ENCODE measurements at regions of chr15 and their contacts with region 1.

Region 1: GRCh38 chr15:81265944-81266775 is 57.8 kb downstream of the STARD5 start:
- DNase-seq: no peak
- ATAC-seq: peak; percentile 97
- H3K4me3 ChIP-seq: no peak overlapping the region
- H3K27ac ChIP-seq: no peak overlapping the region
- H3K4me1 ChIP-seq: peaks cover 22% of the 10 kb centered on the region
- H3K27me3 ChIP-seq: no peaks in the 10 kb centered on the region; a peak in 1 of 4 replicates
- CTCF ChIP-seq: peak; percentile 93 to 94 (median 94)
- EP300 ChIP-seq: no peak
- POLR2A ChIP-seq: no peak
- RAD21 ChIP-seq: peak; percentile 92

Region 2: DNA sequence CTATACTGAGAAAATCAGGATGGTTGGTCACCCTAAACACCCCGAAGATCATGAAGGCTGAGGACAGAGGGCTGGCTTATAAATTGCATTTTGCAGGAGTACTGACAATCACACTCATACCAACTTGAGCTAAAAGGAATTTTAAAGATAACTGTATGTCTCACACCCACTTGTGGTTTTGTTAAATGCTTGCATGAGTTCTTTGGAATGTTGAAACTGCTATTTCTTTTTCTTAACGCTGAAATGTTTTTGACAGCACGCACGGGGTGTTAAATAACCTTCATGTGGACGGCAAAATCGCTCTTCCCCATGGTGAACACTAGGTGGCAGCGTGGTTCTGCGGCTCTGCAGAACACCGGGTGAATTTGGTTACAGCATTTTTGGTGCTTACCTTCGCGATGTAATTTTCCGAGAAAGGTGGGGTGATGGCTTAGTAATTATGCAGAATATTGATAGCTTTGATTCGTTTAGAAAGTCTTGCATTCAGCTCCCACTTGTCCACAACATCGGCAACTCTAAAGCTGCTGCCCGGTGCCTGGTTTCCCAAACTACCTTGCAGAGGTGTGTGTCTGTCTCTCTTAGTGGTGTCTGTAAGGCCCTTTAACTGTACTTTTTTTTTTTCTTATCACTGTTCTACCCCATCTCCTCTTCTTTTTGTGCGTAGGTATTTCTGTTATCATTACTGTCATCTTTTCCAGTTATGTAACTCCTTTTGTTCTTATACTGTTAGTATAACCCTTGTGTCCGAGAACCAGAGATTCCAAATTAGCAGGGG is 810.3 kb before region 1 on chr15:
- CTCF ChIA-PET with region 1: interaction called, 12 read pairs
- POLR2A ChIA-PET with region 1: no interaction called
- RAD21 ChIA-PET with region 1: interaction called, 6 read pairs
- SMC1A ChIA-PET with region 1: no interaction called
- in situ Hi-C with region 1: loop called (anchors 10 kb)
- intact Hi-C with region 1: loop called (anchors 5 kb)
- DNase-seq: peak; percentile 16
- ATAC-seq: peak; percentile 88
- H3K4me3 ChIP-seq: no peak overlapping the region
- H3K27ac ChIP-seq: no peak overlapping the region
- H3K4me1 ChIP-seq: no peaks in the 10 kb centered on the region
- H3K27me3 ChIP-seq: no peaks in the 10 kb centered on the region; a peak in 3 of 4 replicates
- CTCF ChIP-seq: peak; percentile 90 to 98 (median 97); a peak in 5 of 6 replicates
- EP300 ChIP-seq: no peak
- POLR2A ChIP-seq: no peak
- RAD21 ChIP-seq: peak; percentile 96

Region 3: GRCh38 chr15:81000624-81001151 is 265.5 kb before region 1 on chr15 and contains the start of gene TLNRD1:
- CTCF ChIA-PET with region 1: interaction called, 37 read pairs
- POLR2A ChIA-PET with region 1: interaction called, 3 read pairs
- RAD21 ChIA-PET with region 1: interaction called, 11 read pairs
- SMC1A ChIA-PET with region 1: interaction called, 12 read pairs
- in situ Hi-C with region 1: loop called (anchors 5 kb)
- intact Hi-C with region 1: loop called (anchors 1 kb)
- DNase-seq: no peak
- ATAC-seq: peak; percentile 74
- H3K4me3 ChIP-seq: peak within 1 kb of the TSS; percentile 87
- H3K27ac ChIP-seq: peak within 1 kb of the TSS; percentile 92
- H3K4me1 ChIP-seq: peaks cover 19% of the 10 kb centered on the region
- H3K27me3 ChIP-seq: no peaks in the 10 kb centered on the region
- CTCF ChIP-seq: no peak
- EP300 ChIP-seq: no peak
- POLR2A ChIP-seq: peak; percentile 92
- RAD21 ChIP-seq: no peak
- polyA plus RNA-seq, gene TLNRD1: 2.5 to 5.7 TPM

Region 4: DNA sequence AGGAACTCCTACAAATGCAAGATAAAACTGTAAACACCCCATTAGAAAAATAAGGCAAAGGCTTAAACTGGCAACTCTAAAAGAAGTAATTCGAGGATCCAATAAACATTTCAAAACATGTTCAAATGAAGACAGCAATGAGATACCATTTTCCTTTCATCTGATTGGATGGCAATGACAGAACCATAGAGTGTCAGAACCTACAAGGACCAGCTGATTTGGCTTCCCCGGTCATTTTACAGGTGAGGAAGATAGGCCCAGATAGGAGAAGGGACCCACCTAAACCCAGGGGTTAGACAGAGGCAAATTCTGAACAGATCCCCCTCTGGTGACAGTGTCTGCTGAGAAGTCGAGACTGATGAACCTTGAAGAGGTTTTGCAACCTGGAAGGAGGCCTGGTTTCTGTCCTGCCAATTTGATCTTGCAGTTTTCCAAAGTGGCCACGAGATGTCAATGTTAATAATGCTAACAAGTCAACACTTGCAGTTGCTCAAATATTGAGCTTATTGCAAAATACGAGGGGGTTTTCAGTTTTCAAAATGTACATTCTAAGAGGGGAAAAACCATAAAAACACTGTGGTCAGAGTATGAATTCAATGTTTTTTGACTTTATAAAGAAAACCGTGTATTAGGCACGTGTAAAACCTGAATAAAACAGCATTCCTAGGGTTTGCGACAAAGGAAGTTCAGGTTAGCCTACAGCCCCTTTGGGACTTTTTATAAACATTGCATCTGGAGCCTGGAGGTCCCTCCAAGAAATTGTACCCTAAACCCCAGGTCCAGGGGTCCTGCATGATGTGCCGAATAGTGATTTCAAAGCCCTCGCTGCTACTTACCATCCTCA is 110.6 kb before region 1 on chr15:
- CTCF ChIA-PET with region 1: interaction called, 249 read pairs
- POLR2A ChIA-PET with region 1: interaction called, 3 read pairs
- RAD21 ChIA-PET with region 1: interaction called, 118 read pairs
- SMC1A ChIA-PET with region 1: interaction called, 102 read pairs
- in situ Hi-C with region 1: loop called (anchors 5 kb)
- intact Hi-C with region 1: loop called (anchors 1 kb)
- DNase-seq: no peak
- ATAC-seq: peak; percentile 76
- H3K4me3 ChIP-seq: no peak overlapping the region
- H3K27ac ChIP-seq: no peak overlapping the region
- H3K4me1 ChIP-seq: no peaks in the 10 kb centered on the region
- H3K27me3 ChIP-seq: peaks cover 0 to 2% of the 10 kb centered on the region in 2 experiments; a peak in 1 of 4 replicates
- CTCF ChIP-seq: peak; percentile 55 to 63 (median 58); a peak in 5 of 6 replicates
- EP300 ChIP-seq: no peak
- POLR2A ChIP-seq: no peak
- RAD21 ChIP-seq: peak; percentile 66

Region 5: GRCh38 chr15:81244306-81244705 is 21.9 kb before region 1 on chr15:
- CTCF ChIA-PET with region 1: interaction called, 16 read pairs
- POLR2A ChIA-PET with region 1: no interaction called
- RAD21 ChIA-PET with region 1: interaction called, 3 read pairs
- SMC1A ChIA-PET with region 1: interaction called, 4 read pairs
- in situ Hi-C with region 1: no loop called
- intact Hi-C with region 1: no loop called
- DNase-seq: no peak
- ATAC-seq: no peak
- H3K4me3 ChIP-seq: no peak overlapping the region
- H3K27ac ChIP-seq: no peak overlapping the region
- H3K4me1 ChIP-seq: no peaks in the 10 kb centered on the region
- H3K27me3 ChIP-seq: no peaks in the 10 kb centered on the region; a peak in 2 of 4 replicates
- CTCF ChIP-seq: no peak
- EP300 ChIP-seq: no peak
- POLR2A ChIP-seq: no peak
- RAD21 ChIP-seq: no peak

Region 6: DNA sequence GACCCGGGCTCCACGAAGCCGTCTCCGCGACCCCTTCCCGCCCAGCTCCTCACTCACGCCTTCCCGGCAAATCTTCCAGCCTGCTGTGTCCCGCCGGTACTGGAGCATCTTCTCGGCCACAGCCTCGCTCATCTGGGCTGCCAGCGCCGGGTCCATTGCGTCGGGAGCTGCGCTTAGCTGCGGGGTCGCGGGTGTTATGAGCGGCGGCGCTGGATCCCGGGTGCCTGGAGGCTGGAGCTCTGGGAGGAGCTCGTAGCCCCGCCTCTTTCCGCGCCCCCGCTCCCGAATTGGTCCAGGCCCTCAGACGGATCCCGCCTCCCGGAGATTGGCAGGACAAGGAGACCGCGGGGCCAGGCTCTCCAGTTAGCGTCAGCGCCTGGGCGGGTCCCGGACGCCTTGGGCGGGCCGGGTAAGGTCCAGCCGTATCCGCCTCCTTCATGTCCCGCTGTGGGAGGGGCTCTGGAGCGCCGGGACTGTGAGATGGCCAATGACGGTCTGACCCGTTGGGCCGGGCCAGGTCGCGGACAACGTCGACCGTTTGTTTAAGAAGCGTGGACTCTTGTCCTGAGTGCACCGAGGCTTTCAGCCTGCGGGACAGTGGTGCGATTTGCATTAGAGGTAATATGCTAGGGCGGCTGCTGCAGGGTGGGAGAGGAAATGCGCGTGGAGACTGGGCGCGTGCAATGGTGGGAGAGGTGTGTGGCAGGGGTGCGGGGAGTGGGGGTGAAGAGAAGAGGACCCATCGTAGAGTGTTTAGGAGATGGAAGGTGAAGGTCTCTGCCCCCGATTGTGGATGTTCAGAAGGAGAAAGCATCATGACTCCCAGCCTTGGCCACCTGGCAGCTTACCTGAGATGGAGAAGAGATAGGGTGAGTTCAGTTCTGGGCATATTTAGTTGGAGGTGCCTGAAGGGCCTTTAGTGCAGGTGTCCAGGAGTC is 58.1 kb after region 1 on chr15 and contains the start of gene STARD5:
- CTCF ChIA-PET with region 1: interaction called, 19 read pairs
- POLR2A ChIA-PET with region 1: no interaction called
- RAD21 ChIA-PET with region 1: interaction called, 9 read pairs
- SMC1A ChIA-PET with region 1: interaction called, 5 read pairs
- in situ Hi-C with region 1: no loop called
- intact Hi-C with region 1: no loop called
- DNase-seq: peak; percentile 69
- ATAC-seq: peak; percentile 100
- H3K4me3 ChIP-seq: peak within 1 kb of the TSS; percentile 89
- H3K27ac ChIP-seq: peak within 1 kb of the TSS; percentile 32
- H3K4me1 ChIP-seq: peaks cover 8% of the 10 kb centered on the region
- H3K27me3 ChIP-seq: no peaks in the 10 kb centered on the region
- CTCF ChIP-seq: no peak
- EP300 ChIP-seq: no peak
- POLR2A ChIP-seq: peak; percentile 95
- RAD21 ChIP-seq: no peak
- polyA plus RNA-seq, gene STARD5: 2.3 to 3.5 TPM

Region 7: GRCh38 chr15:81394603-81395002 is 128.4 kb after region 1 on chr15:
- CTCF ChIA-PET with region 1: interaction called, 29 read pairs
- POLR2A ChIA-PET with region 1: no interaction called
- RAD21 ChIA-PET with region 1: interaction called, 20 read pairs
- SMC1A ChIA-PET with region 1: interaction called, 32 read pairs
- in situ Hi-C with region 1: no loop called
- intact Hi-C with region 1: no loop called
- DNase-seq: no peak
- ATAC-seq: no peak
- H3K4me3 ChIP-seq: no peak overlapping the region
- H3K27ac ChIP-seq: no peak overlapping the region
- H3K4me1 ChIP-seq: no peaks in the 10 kb centered on the region
- H3K27me3 ChIP-seq: no peaks in the 10 kb centered on the region
- CTCF ChIP-seq: no peak
- EP300 ChIP-seq: no peak
- POLR2A ChIP-seq: no peak
- RAD21 ChIP-seq: no peak